ENCODE measurements at regions of chr15 and their contacts with region 1.

Region 1: GRCh38 chr15:40338041-40338657 is 2.6 kb downstream of the CCDC9B start:
- DNase-seq: peak; percentile 92
- ATAC-seq: peak; percentile 82
- H3K4me3 Mint-ChIP-seq: 0 out of 2 replicates have a peak overlapping the region, but pooled peaks have one; percentile 27
- H3K27ac Mint-ChIP-seq: no peak overlapping the region
- H3K4me1 Mint-ChIP-seq: peaks cover 42% of the 10 kb centered on the region
- H3K27me3 Mint-ChIP-seq: peaks cover 5% of the 10 kb centered on the region
- CTCF ChIP-seq: peak; percentile 87

Region 2: GRCh38 chr15:40108855-40109735 is 229.1 kb before region 1 on chr15 and contains the start of gene BMF:
- CTCF ChIA-PET with region 1: no interaction called
- POLR2A ChIA-PET with region 1: no interaction called
- DNase-seq: peak; percentile 100
- ATAC-seq: peak; percentile 70
- H3K4me3 Mint-ChIP-seq: peak within 1 kb of the TSS; percentile 89
- H3K27ac Mint-ChIP-seq: peak within 1 kb of the TSS; percentile 95
- H3K4me1 Mint-ChIP-seq: peaks cover 69% of the 10 kb centered on the region
- H3K27me3 Mint-ChIP-seq: peaks cover 2% of the 10 kb centered on the region; the same call in 1 of the 2 replicates
- CTCF ChIP-seq: no peak
- total RNA-seq, gene BMF: 32.9 to 36.9 TPM (median 36.6 TPM) in 3 replicates

Region 3: DNA sequence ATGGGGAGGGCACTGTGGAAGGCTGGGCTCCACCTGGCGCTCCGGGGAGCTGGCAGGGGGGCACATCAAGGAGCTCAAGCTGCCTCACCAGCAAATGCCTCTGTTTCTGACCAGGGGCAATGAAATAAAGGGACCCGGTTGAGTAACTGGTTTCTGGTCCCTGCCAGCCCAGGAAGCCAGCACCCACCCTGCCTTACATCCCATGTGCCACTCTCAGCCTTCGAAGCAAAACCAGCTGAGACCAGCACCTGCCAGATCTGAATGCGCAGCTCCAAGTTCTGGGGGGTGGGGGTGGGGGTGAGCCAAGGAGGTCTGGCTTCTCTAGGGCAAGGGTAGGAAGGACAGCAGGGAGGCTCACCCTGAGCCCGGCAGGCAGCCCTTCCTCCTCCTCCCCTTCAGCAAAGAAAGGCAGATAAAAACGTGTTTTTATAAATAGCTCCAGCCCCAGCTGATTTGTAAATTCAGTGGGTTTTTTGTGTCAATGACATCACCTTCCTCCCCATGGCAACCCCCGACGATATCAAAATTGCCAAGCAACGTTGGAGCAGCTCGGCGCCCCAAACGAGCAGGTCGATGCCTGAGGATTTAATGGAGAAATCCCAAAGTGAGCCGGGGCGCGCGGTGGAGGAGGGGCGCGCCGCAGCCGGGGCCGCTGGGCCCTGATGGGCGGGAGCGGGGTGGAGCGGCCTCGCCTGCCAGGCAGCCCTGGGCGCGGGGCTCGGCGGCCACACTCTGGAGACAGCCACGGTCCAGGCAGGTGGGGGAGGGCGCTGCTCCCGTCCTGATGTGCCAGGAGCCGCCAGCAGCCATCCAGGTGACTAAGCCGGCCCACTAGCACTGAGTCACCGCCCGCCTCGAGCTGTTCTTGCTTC is 99.4 kb before region 1 on chr15 and contains the start of gene PAK6:
- CTCF ChIA-PET with region 1: interaction called, 21 read pairs
- POLR2A ChIA-PET with region 1: no interaction called
- DNase-seq: peak; percentile 82
- ATAC-seq: peak; percentile 92
- H3K4me3 Mint-ChIP-seq: peak within 1 kb of the TSS; percentile 60
- H3K27ac Mint-ChIP-seq: no peak within 1 kb of the TSS
- H3K4me1 Mint-ChIP-seq: peaks cover 12% of the 10 kb centered on the region
- H3K27me3 Mint-ChIP-seq: no peaks in the 10 kb centered on the region
- CTCF ChIP-seq: no peak
- total RNA-seq, gene PAK6: 8.7 to 11.7 TPM (median 9.6 TPM) in 3 replicates

Region 4: GRCh38 chr15:40251486-40252140 is 86.5 kb before region 1 on chr15:
- CTCF ChIA-PET with region 1: no interaction called
- POLR2A ChIA-PET with region 1: no interaction called
- DNase-seq: no peak
- ATAC-seq: peak; percentile 7
- H3K4me3 Mint-ChIP-seq: peak overlapping the region; percentile 52
- H3K27ac Mint-ChIP-seq: no peak overlapping the region
- H3K4me1 Mint-ChIP-seq: peaks cover 18% of the 10 kb centered on the region
- H3K27me3 Mint-ChIP-seq: peaks cover 38% of the 10 kb centered on the region
- CTCF ChIP-seq: no peak

Region 5: GRCh38 chr15:40290918-40291574 is 47.1 kb before region 1 on chr15:
- CTCF ChIA-PET with region 1: interaction called, 73 read pairs
- POLR2A ChIA-PET with region 1: no interaction called
- DNase-seq: peak; percentile 69
- ATAC-seq: peak; percentile 76
- H3K4me3 Mint-ChIP-seq: peak overlapping the region; percentile 56
- H3K27ac Mint-ChIP-seq: no peak overlapping the region
- H3K4me1 Mint-ChIP-seq: peaks cover 18% of the 10 kb centered on the region
- H3K27me3 Mint-ChIP-seq: peaks cover 42% of the 10 kb centered on the region
- CTCF ChIP-seq: no peak

Region 6: DNA sequence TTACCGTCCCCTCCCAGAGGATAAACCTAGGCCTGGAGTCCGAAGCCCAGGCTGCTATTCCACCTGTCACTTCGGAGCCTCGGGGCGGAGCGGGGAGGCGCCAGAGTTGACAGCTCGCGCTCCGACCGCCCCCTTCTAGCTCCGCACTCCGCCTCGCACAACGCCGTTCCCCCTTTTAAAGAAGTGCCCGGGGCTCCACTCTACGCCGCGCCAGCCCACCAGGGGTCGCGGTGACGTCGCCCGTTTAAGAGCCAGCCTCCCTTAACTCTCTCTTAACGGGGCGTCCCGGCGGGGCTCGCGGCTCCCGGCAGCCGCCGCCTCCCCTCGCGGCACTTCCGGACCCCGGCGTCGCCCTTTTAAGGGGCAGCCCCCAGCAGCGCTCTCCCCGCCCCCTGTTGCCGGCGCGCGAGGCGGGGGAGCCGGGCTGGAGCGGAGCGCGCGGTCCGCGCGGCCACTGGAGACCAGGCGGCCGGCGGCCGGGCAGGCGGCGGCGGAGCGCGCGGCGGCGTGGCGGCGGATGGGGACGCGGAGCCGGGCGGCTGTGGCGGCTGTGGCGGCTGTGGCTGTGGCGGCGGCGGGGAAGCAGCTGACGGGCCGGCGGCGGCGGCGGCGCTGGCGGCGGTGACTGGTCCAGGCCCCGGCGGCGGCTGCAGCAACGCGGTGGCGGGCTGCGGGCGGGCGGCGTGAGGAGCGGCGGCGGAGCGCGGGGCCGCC is 14.8 kb before region 1 on chr15 and contains the start of gene INAFM2:
- CTCF ChIA-PET with region 1: interaction called, 264 read pairs
- POLR2A ChIA-PET with region 1: interaction called, 10 read pairs
- DNase-seq: peak; percentile 96
- ATAC-seq: peak; percentile 82
- H3K4me3 Mint-ChIP-seq: peak within 1 kb of the TSS; percentile 68
- H3K27ac Mint-ChIP-seq: no peak within 1 kb of the TSS
- H3K4me1 Mint-ChIP-seq: peaks cover 62% of the 10 kb centered on the region
- H3K27me3 Mint-ChIP-seq: peaks cover 25% of the 10 kb centered on the region
- CTCF ChIP-seq: no peak
- total RNA-seq, gene INAFM2: 28.2 to 34.2 TPM (median 30.3 TPM) in 3 replicates

Region 7: DNA sequence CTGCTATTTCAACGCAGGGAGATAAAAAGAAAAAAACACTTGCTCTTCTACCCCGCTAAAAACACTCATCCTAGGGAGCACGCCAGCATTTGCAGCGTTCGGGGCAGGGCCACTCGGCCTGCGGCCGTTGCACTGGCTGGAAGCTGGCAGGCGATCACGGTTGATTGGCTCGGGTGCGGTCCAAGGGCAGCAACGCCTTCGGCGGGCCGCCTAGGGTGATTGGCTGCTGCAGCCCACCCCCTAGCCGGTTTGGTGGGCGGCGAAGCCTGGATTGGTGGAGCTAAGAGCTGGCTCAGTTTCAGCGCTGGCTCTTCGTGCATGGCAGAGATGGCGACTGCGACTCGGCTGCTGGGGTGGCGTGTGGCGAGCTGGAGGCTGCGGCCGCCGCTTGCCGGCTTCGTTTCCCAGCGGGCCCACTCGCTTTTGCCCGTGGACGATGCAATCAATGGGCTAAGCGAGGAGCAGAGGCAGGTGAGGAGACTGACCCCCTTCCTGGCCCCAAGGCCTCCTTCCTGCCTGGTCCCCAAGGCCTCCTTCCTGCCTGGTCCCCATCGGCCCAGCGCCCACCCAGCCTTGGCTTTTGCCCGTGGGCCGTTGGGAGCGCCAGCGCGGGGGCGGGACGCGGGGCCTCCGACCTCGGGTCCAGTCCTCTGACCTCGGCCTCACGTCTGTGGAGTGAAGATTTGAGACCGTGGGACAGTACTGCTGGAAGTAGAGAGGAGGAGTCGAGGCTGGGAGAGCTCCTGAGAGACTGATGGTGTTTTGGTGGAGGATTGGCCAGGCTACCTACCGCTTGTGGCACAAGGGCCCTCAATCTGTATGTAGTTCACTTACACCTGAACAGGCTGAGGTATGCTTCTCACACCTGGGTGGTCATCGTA is 67.6 kb after region 1 on chr15 and contains the start of gene IVD:
- CTCF ChIA-PET with region 1: interaction called, 24 read pairs
- POLR2A ChIA-PET with region 1: no interaction called
- DNase-seq: peak; percentile 95
- ATAC-seq: peak; percentile 100
- H3K4me3 Mint-ChIP-seq: peak within 1 kb of the TSS; percentile 88
- H3K27ac Mint-ChIP-seq: peak within 1 kb of the TSS; percentile 96
- H3K4me1 Mint-ChIP-seq: peaks cover 17% of the 10 kb centered on the region
- H3K27me3 Mint-ChIP-seq: no peaks in the 10 kb centered on the region
- CTCF ChIP-seq: no peak
- total RNA-seq, gene IVD: 82.2 to 96.1 TPM (median 89.3 TPM) in 3 replicates

Region 8: GRCh38 chr15:40440743-40441564 is 102.8 kb after region 1 on chr15 and contains the start of gene BAHD1:
- CTCF ChIA-PET with region 1: interaction called, 23 read pairs
- POLR2A ChIA-PET with region 1: no interaction called
- DNase-seq: peak; percentile 99
- ATAC-seq: peak; percentile 69
- H3K4me3 Mint-ChIP-seq: peak within 1 kb of the TSS; percentile 90
- H3K27ac Mint-ChIP-seq: peak within 1 kb of the TSS; percentile 78
- H3K4me1 Mint-ChIP-seq: peaks cover 58% of the 10 kb centered on the region
- H3K27me3 Mint-ChIP-seq: no peaks in the 10 kb centered on the region
- CTCF ChIP-seq: no peak
- total RNA-seq, gene BAHD1: 40.7 to 49.1 TPM (median 41.5 TPM) in 3 replicates

Region 9: DNA sequence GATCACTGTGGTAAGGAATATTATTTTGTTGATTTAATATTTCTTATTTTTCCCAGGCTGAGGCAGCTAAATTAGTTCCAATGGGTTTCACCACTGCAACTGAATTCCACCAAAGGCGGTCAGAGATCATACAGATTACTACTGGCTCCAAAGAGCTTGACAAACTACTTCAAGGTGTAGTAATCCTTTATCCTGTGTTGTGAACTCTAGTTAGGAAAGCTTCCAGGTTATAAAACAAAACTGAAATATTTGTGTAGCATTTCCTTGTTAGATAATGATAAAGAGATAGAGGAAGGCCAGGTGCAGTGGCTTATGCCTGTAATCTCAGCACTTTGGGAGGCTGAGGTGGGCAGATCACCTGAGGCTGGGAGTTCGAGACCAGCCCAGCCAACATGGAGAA is 368.0 kb after region 1 on chr15:
- CTCF ChIA-PET with region 1: no interaction called
- POLR2A ChIA-PET with region 1: no interaction called
- DNase-seq: no peak
- ATAC-seq: no peak
- H3K4me3 Mint-ChIP-seq: no peak overlapping the region
- H3K27ac Mint-ChIP-seq: no peak overlapping the region
- H3K4me1 Mint-ChIP-seq: no peaks in the 10 kb centered on the region
- H3K27me3 Mint-ChIP-seq: no peaks in the 10 kb centered on the region
- CTCF ChIP-seq: no peak

Measured in WTC11 (cell line).